ENCODE measurements at regions of chr4 and their contacts with region 1.

Region 1: DNA sequence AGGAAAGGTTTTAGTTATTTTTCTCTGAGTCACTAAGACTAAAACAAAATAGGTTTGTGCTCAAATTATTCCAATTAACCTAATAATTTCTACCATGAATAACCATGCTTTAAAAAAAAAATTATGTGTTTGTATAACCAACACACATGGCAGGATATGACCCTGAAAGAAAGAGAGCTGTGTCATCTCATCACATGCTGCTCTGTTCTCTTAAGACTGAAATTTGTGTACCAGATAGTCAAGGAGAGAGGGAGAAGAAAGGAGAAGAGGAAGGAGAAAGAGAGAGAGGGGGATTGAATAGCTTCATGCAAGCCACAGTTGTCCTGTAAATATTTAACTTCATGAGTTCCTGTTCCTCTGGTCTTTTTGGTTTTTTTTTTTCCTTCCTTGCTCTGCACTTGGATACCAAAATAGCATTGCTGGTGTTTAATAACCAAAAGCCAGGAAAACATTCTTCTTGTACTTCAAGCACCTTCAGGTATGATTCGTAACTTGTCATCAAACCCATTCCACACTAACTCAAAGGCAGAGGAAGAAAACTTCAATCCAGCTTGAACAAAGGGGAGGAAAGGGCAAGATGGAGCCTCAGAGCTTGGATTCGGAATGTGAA is 6.4 kb upstream of the PROM1 start:
- DNase-seq: no peak
- H3K4me3 ChIP-seq: no peak overlapping the region
- H3K27ac ChIP-seq: no peak overlapping the region
- H3K4me1 ChIP-seq: no peaks in the 10 kb centered on the region
- H3K27me3 ChIP-seq: 0 out of 2 replicates have a peak, but pooled peaks cover 3% of the 10 kb centered on the region
- CTCF ChIP-seq: no peak

Region 2: DNA sequence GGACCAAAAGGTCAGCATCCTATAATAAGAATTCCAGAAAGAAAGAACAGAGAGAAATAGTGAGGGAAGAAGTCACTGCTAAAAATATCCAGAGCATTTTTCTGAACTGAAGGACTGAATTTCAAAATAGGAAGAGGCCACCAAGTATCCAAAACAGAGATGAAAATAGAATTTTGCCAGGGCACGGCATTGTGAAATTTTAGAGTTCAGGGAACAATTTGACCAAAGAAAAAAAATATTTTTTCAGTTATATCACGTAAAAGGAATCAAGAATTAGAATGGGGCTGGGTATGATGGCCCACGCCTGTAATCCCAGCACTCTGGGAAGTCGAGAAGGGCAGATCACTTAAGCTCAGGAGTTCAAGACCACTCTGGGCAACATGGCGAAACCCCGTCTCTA is 217.1 kb before region 1 on chr4:
- CTCF ChIA-PET with region 1: no interaction called
- POLR2A ChIA-PET with region 1: no interaction called
- intact Hi-C with region 1: no loop called
- DNase-seq: no peak
- H3K4me3 ChIP-seq: no peak overlapping the region
- H3K27ac ChIP-seq: no peak overlapping the region
- H3K4me1 ChIP-seq: no peaks in the 10 kb centered on the region
- H3K27me3 ChIP-seq: no peaks in the 10 kb centered on the region
- CTCF ChIP-seq: no peak

Region 3: DNA sequence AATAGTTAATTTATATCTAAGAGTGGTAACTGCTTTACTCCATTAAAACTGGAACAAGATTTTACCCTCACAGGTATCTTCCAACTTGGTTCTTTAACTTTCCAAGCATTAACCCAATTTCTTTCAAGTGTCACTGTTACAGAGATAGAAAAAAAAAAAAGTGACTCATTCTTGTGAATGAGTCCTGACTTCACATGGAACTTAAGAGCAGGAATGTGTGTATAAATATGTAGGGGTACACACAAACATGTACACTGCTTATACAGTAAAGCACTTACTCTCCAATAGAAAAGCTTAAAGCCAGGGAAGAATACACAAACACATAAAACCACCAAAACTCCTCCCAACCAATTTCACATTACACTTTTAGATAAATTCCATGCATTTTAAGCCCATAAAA is 97.3 kb after region 1 on chr4:
- CTCF ChIA-PET with region 1: no interaction called
- POLR2A ChIA-PET with region 1: no interaction called
- intact Hi-C with region 1: loop called (anchors 10 kb)
- DNase-seq: no peak
- H3K4me3 ChIP-seq: no peak overlapping the region
- H3K27ac ChIP-seq: no peak overlapping the region
- H3K4me1 ChIP-seq: no peaks in the 10 kb centered on the region
- H3K27me3 ChIP-seq: no peaks in the 10 kb centered on the region
- CTCF ChIP-seq: no peak